ENCODE measurements at regions of chr3 and their contacts with region 1.

Region 1: GRCh38 chr3:1348547-1348946 is 255.7 kb downstream of the CNTN6 start:
- DNase-seq: no peak
- H3K4me3 ChIP-seq: no peak overlapping the region
- H3K4me3 Mint-ChIP-seq: no peak overlapping the region
- H3K27ac Mint-ChIP-seq: no peak overlapping the region
- H3K4me1 ChIP-seq: no peaks in the 10 kb centered on the region
- H3K4me1 Mint-ChIP-seq: no peaks in the 10 kb centered on the region
- H3K27me3 ChIP-seq: no peaks in the 10 kb centered on the region
- H3K27me3 Mint-ChIP-seq: peaks cover 5% of the 10 kb centered on the region
- CTCF ChIP-seq: no peak

Region 2: DNA sequence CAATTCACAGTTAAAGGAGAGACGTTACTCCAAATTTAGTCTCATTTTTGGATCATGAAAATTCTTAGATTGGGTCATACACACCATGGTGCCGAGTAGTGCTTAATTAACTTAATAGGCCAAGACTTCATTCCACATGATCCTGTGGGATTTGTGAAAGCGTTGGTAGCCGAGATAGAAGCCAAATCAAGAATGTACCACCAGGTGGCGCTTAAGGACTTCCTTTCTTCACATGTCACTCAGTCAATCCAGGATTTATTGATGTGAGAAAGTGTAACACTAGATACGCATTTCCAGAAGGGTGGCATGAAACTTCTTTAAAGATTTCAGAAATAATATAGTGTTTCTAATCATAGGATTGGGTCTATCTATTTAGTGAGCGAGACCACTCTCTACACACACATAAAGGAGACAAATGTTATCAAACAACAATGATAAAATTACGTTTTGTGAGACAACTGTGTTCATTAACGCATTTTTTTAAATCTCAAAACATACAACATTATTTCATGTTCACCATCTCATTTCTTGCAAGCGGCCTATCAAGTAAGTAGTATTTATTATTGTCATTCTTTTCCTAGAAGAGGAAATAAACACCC is 715.9 kb before region 1 on chr3:
- CTCF ChIA-PET with region 1: no interaction called
- POLR2A ChIA-PET with region 1: no interaction called
- intact Hi-C with region 1: loop called (anchors 5 kb)
- DNase-seq: peak; percentile 60 to 65
- H3K4me3 ChIP-seq: no peak overlapping the region
- H3K4me3 Mint-ChIP-seq: no peak overlapping the region
- H3K27ac Mint-ChIP-seq: no peak overlapping the region
- H3K4me1 ChIP-seq: no peaks in the 10 kb centered on the region
- H3K4me1 Mint-ChIP-seq: no peaks in the 10 kb centered on the region
- H3K27me3 ChIP-seq: no peaks in the 10 kb centered on the region
- H3K27me3 Mint-ChIP-seq: peaks cover 4% of the 10 kb centered on the region
- CTCF ChIP-seq: peak; percentile 55 to 69

Region 3: GRCh38 chr3:908839-909238 is 439.7 kb before region 1 on chr3:
- CTCF ChIA-PET with region 1: no interaction called
- POLR2A ChIA-PET with region 1: no interaction called
- intact Hi-C with region 1: loop called (anchors 5 kb)
- DNase-seq: peak in 1 of 2 experiments; percentile 3
- H3K4me3 ChIP-seq: no peak overlapping the region
- H3K4me3 Mint-ChIP-seq: no peak overlapping the region
- H3K27ac Mint-ChIP-seq: no peak overlapping the region
- H3K4me1 ChIP-seq: peaks cover 4% of the 10 kb centered on the region
- H3K4me1 Mint-ChIP-seq: peaks cover 6% of the 10 kb centered on the region
- H3K27me3 ChIP-seq: no peaks in the 10 kb centered on the region
- H3K27me3 Mint-ChIP-seq: no peaks in the 10 kb centered on the region
- CTCF ChIP-seq: peak in 1 of 2 experiments; percentile 30

Region 4: DNA sequence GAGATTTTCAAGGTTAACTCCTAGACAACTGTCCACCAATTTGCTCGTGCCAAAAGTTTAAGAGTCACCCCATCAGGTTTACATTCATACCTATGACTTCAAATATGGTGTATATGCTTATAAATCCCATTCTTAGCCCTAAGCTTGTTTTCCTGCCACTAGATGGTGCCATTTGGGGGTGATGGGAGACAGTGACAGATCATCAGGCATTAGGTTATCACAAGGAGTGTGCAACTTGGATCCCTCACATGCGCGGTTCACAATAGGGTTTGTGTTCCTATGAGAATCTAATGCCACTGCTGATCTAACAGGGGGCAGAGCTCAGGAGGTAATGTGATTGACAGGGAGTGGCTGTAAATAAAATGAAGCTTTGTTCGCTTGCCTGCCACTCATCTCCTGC is 73.1 kb before region 1 on chr3:
- CTCF ChIA-PET with region 1: no interaction called
- POLR2A ChIA-PET with region 1: no interaction called
- intact Hi-C with region 1: loop called (anchors 10 kb)
- DNase-seq: peak; percentile 30 to 38
- H3K4me3 ChIP-seq: no peak overlapping the region
- H3K4me3 Mint-ChIP-seq: no peak overlapping the region
- H3K27ac Mint-ChIP-seq: no peak overlapping the region
- H3K4me1 ChIP-seq: no peaks in the 10 kb centered on the region
- H3K4me1 Mint-ChIP-seq: no peaks in the 10 kb centered on the region
- H3K27me3 ChIP-seq: no peaks in the 10 kb centered on the region
- H3K27me3 Mint-ChIP-seq: peaks cover 6% of the 10 kb centered on the region
- CTCF ChIP-seq: peak; percentile 32 to 47

Region 5: GRCh38 chr3:1326546-1326945 is 22.0 kb before region 1 on chr3:
- CTCF ChIA-PET with region 1: no interaction called
- POLR2A ChIA-PET with region 1: no interaction called
- intact Hi-C with region 1: no loop called
- DNase-seq: no peak
- H3K4me3 ChIP-seq: no peak overlapping the region
- H3K4me3 Mint-ChIP-seq: no peak overlapping the region
- H3K27ac Mint-ChIP-seq: no peak overlapping the region
- H3K4me1 ChIP-seq: no peaks in the 10 kb centered on the region
- H3K4me1 Mint-ChIP-seq: no peaks in the 10 kb centered on the region
- H3K27me3 ChIP-seq: no peaks in the 10 kb centered on the region
- H3K27me3 Mint-ChIP-seq: peaks cover 4% of the 10 kb centered on the region
- CTCF ChIP-seq: no peak

Measured in Caco-2 (cell line).